Right cardiac atrium (tissue), 5 donors: ENCODE measurements at regions of chr4 and their contacts with region 1.

Region 1: GRCh38 chr4:76758290-76758882 is 139.6 kb downstream of the SOWAHB start:
- DNase-seq: peak in 1 of 3 donors; percentile 30
- ATAC-seq: peak; percentile 50 to 63
- H3K4me3 ChIP-seq: no peak overlapping the region
- H3K27ac ChIP-seq: no peak overlapping the region
- H3K4me1 ChIP-seq: no peaks in the 10 kb centered on the region
- H3K27me3 ChIP-seq: no peaks in the 10 kb centered on the region

Region 2: DNA sequence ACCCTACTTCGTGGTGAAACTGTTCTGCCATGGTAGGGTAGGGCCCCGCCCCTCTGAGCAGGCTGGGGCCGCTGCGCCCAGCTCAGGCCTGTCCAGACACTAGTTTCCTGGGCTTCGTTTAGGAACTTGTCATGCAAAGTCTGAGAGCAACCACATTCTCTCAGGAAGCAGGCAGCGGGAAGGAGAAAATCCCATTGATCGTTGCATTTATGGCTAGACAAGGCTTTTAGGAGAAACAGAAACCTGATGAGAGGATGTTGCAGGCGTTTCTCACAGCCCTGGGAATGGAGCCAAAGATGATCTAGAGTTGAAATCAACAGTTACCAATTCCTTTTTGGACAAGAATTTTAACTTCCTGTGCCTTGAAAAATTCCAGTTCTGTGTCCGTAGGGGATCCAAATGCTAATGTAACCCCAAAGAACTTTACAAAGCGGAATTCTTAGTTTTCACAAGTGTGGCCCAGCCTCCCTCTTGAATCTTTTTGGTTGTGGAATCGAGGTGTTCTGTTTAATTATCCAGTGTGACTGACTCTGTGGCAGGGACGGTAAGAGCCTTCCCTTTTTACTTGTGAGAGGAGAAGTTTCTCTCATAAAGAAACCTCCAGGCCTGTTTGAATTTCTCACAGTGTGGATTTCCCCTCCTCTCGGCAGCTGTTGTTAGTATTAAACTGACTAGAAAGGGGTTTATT is 746.5 kb before region 1 on chr4:
- intact Hi-C with region 1: no loop called
- DNase-seq: peak; percentile 27 to 50 (median 48)
- ATAC-seq: peak; percentile 72 to 79
- H3K4me3 ChIP-seq: peak overlapping the region; percentile 2
- H3K27ac ChIP-seq: peak overlapping the region; percentile 9
- H3K4me1 ChIP-seq: no peaks in the 10 kb centered on the region
- H3K27me3 ChIP-seq: no peaks in the 10 kb centered on the region

Region 3: DNA sequence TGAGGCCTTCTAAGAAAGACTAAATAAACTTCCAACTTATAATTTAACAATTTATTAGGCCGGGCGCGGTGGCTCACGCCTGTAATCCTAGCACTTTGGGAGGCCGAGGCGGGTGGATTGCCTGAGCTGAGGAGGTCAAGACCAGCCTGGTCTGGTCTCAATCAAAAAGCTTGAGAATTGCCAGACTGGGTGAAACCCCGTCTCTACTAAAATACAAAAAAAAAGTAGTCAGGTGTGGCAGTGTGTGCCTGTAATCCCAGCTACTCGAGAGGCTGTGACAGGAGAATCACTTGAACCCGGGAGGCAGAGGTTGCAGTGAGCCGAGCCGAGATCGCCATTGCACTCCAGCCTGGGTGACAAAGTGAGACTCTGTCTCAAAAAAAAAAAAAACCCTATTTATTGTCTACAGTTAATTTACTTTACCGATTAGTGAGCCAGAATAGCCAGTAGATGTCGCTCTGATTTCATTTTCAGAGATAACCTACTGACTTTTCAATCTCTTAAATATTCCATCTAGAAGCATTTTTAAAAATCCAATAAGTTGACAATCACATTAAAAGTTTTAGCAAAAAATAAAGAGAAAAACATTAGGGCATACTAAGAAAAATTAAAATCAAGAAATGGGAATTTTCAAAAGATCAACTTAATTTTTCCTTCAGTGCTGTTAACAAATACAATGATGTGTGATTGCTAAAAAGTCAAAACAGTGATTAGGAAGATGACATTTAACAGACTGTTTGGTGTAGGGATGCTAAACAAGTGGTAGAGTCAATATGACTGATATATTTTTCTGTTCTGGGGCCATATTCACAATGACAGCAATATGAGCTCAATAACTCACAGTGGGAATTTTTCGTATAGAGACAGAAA is 327.6 kb before region 1 on chr4:
- intact Hi-C with region 1: loop called in 1 of 4 experiments (anchors 10 kb)
- DNase-seq: no peak
- ATAC-seq: no peak
- H3K4me3 ChIP-seq: no peak overlapping the region
- H3K27ac ChIP-seq: no peak overlapping the region
- H3K4me1 ChIP-seq: no peaks in the 10 kb centered on the region
- H3K27me3 ChIP-seq: no peaks in the 10 kb centered on the region

Region 4: DNA sequence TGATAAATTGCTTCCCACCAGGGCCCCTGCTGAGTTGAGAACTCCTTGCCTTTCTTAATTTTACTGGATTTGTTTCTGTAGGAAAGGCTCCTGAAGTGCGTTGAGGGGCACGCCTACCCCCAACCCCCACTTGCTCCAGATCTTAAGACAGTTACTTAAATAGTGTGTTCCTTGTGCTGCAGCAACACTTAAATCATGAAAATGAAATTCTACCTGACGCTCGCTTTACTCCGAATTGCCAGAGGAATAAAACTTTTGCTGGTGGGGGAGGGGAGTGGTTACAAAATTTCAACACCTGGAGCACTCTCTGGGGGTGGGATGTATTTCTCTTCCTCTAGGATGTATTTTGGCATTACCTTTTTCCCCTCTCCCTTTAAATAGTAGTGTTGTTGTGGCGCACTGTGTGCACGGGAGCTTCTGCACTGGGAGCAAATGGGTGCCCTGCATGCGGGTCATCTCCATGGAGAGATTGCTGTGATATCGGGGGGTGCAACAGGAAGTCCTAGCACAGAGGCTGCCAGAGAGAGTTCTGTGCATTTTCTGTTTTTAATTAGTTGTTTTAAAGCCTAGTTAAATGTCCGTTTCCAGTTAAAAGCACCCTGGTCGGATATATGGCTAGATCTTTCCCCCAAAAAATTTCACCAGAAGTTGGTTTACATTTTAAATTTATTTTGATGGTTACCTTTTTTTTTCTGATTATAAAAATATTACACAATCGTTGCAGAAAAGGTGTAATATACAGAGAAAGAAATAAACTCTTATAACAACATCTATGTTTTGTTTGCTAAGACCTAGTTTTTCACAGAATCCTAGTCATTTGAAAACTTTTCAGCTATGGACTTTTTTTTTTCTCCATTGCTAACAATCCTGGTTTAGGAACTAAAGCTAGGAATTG is 68.1 kb before region 1 on chr4:
- intact Hi-C with region 1: loop called in 1 of 4 experiments (anchors 10 kb)
- DNase-seq: no peak
- ATAC-seq: no peak
- H3K4me3 ChIP-seq: peak overlapping the region; percentile 49
- H3K27ac ChIP-seq: no peak overlapping the region
- H3K4me1 ChIP-seq: peaks cover 4% of the 10 kb centered on the region
- H3K27me3 ChIP-seq: no peaks in the 10 kb centered on the region